Mucosa of descending colon (tissue), 3 donors: ENCODE measurements at regions of chr15 and their contacts with region 1.

Region 1: DNA sequence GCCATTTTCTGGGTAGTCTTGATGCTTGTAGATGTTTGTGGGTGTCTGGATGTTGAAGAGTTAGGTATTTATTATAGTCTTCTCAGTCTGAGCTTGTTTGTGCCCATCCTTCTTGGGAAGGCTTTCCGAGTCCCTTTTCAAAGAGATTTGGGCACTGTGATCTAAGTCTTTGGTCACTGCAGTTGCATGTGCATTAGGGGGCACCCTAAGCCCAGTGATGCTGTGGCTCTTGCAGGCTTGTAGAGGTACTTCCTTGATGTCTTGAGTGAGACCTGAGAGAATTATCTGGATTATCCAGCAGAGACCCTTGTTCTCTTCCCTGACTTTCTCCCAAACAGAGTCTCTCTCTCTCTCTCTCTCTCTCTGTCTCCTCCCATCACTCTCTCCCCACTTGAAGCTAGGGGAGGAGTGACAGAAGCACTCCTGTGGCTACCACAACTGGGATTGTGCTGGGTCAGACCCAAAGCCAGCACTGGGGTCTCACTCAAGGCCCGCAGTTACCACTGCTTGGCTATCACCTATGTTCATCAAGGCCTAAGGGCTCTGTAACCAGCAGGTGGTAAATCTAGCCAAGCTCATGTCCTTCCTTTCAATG is 68.5 kb downstream of the TMCO5A start:
- DNase-seq: peak; percentile 47 to 82 (median 74)
- ATAC-seq: peak; percentile 91
- H3K4me3 ChIP-seq: no peak overlapping the region
- H3K4me1 ChIP-seq: no peaks in the 10 kb centered on the region
- CTCF ChIP-seq: no peak

Region 2: GRCh38 chr15:37818152-37818677 is 184.8 kb before region 1 on chr15:
- intact Hi-C with region 1: no loop called
- DNase-seq: no peak
- ATAC-seq: no peak
- H3K4me3 ChIP-seq: no peak overlapping the region
- H3K4me1 ChIP-seq: no peaks in the 10 kb centered on the region
- CTCF ChIP-seq: no peak

Region 3: DNA sequence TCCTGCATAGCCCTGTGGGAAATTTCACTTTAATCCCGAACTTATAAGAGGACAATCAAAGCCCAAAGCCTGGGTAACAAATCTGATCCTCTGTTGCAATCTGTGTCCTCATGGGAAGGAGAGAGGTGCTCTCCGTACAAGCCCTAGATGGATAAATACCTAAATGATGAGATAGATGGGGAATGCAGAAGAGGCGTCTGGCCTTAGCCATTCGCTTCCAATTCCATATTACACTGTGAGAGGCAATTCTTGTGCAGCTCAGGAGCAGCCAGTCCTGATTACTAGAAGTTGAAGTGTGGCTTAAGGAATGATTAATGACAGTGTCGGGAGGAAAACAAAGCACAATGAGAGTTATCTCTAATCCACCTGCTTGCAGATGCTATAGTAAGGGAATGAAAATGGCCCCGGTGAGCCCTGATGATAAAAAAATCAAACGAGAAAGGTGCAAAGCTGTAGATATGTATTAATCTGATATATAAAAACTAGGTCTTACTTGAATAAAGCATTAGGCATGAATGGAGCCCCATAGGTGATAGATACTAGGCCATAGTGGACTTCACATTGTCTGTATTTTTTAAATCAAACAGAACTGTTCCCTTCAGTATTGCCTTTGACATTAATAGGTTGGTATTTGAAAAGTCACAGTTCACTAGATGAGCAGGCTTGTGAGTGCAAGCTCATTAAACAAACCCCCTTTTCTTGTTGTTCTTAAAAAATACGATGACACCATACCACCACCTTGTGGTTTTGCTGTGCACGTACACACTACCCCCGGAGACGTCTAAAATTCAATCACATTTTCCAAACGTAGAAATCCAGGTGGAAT is 122.8 kb before region 1 on chr15:
- intact Hi-C with region 1: no loop called
- DNase-seq: no peak
- ATAC-seq: no peak
- H3K4me3 ChIP-seq: no peak overlapping the region
- H3K4me1 ChIP-seq: no peaks in the 10 kb centered on the region
- CTCF ChIP-seq: no peak

Region 4: GRCh38 chr15:38354315-38354929 is 351.4 kb after region 1 on chr15:
- intact Hi-C with region 1: loop called in 1 of 2 experiments (anchors 2 kb)
- DNase-seq: peak in 1 of 3 donors; percentile 86
- ATAC-seq: peak; percentile 71
- H3K4me3 ChIP-seq: no peak overlapping the region
- H3K4me1 ChIP-seq: no peaks in the 10 kb centered on the region
- CTCF ChIP-seq: peak; percentile 32